Activated B cell treated with CpG ODN at 0.5 μM for 24 hours (primary cell): ENCODE measurements at regions of chr2 and their contacts with region 1.

Region 1: DNA sequence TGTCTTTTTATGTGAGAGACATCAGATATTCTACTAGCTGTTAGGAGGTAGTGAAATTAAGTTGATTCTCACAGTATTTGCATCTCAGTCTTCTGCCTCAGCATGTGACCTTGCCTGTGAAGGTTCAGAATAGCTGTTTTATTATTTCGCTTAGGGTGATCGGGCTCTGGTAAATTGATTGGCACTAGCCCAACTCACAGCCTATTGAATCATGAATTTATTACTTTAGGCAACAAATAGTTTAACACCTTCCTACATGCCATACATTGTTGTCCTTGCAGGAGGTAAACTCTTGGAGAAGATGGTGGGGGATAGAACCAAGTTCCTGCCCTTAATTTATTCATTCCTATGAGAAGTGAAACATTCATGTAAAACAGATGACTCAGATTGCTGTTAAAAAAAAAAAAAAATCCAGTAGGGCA is 101.9 kb downstream of the GPD2 start:
- DNase-seq: no peak
- ATAC-seq: peak; percentile 82
- H3K4me3 Mint-ChIP-seq: peak overlapping the region; percentile 67
- H3K27ac Mint-ChIP-seq: peak overlapping the region; percentile 85
- H3K4me1 Mint-ChIP-seq: peaks cover 34% of the 10 kb centered on the region
- H3K27me3 Mint-ChIP-seq: no peaks in the 10 kb centered on the region
- CTCF ChIP-seq: no peak

Region 2: DNA sequence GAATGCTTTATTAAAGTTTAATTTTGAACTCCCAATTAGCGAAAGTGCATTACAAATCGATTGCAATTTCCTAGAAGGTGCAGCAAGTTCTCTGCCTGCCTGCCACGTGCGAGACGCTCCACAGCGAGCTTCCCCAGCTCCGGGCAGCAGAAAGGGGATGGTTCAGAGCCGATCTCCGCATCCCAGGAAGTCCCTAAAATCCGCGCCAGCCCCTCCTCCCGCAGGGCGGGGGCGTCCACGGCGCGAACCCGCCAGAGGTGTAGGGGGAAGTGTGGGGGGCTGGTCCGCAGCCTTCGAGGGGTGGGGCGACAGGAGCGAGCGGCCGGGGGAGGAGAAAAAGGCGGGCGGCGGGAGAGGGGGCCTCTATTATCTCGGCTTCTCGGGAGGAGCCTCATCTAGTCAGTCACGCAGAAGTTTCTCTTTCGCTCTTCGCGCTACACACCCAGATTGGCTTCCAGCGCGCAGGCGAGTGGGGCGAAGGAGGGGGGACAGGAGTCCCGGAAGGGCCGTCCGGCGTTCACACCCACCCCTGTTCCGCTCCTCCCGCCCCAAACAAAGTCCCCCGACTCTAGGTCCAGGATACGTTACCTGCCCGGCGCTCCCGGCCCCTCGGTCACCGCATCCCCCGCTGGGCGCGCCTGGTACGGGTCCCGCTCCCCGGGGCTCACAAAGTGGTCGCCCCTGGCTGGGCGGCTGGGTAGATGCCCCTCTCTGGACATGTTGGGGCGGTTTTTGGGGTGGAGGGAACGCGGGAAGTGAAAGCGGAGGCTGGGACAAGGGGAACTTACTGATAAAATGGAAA is 196.4 kb before region 1 on chr2:
- CTCF ChIA-PET with region 1: no interaction called
- POLR2A ChIA-PET with region 1: interaction called, 17 read pairs
- intact Hi-C with region 1: loop called (anchors 1 kb)
- DNase-seq: peak; percentile 80
- ATAC-seq: peak; percentile 79
- H3K4me3 Mint-ChIP-seq: peak overlapping the region; percentile 92
- H3K27ac Mint-ChIP-seq: peak overlapping the region; percentile 96
- H3K4me1 Mint-ChIP-seq: peaks cover 23% of the 10 kb centered on the region
- H3K27me3 Mint-ChIP-seq: no peaks in the 10 kb centered on the region
- CTCF ChIP-seq: no peak

Region 3: GRCh38 chr2:156486147-156486546 is 51.9 kb before region 1 on chr2:
- CTCF ChIA-PET with region 1: no interaction called
- POLR2A ChIA-PET with region 1: no interaction called
- intact Hi-C with region 1: no loop called
- DNase-seq: no peak
- ATAC-seq: no peak
- H3K4me3 Mint-ChIP-seq: no peak overlapping the region
- H3K27ac Mint-ChIP-seq: no peak overlapping the region
- H3K4me1 Mint-ChIP-seq: peaks cover 20% of the 10 kb centered on the region
- H3K27me3 Mint-ChIP-seq: no peaks in the 10 kb centered on the region
- CTCF ChIP-seq: no peak

Region 4: GRCh38 chr2:156526950-156527636 is 11.0 kb before region 1 on chr2:
- CTCF ChIA-PET with region 1: no interaction called
- POLR2A ChIA-PET with region 1: no interaction called
- intact Hi-C with region 1: loop called (anchors 1 kb)
- DNase-seq: no peak
- ATAC-seq: peak; percentile 83
- H3K4me3 Mint-ChIP-seq: peak overlapping the region; percentile 38
- H3K27ac Mint-ChIP-seq: peak overlapping the region; percentile 41
- H3K4me1 Mint-ChIP-seq: peaks cover 9% of the 10 kb centered on the region
- H3K27me3 Mint-ChIP-seq: no peaks in the 10 kb centered on the region
- CTCF ChIP-seq: no peak